ENCODE measurements at regions of chr9 and their contacts with region 1.

Region 1: GRCh38 chr9:104968025-104968982 is 40.3 kb upstream of the ABCA1 start:
- DNase-seq: peak; percentile 71
- H3K4me3 ChIP-seq: peak overlapping the region; percentile 60
- H3K27me3 ChIP-seq: no peaks in the 10 kb centered on the region
- CTCF ChIP-seq: no peak

Region 2: GRCh38 chr9:104984121-104984520 is 15.8 kb after region 1 on chr9:
- CTCF ChIA-PET with region 1: no interaction called
- POLR2A ChIA-PET with region 1: no interaction called
- DNase-seq: no peak
- H3K4me3 ChIP-seq: no peak overlapping the region
- H3K27me3 ChIP-seq: no peaks in the 10 kb centered on the region
- CTCF ChIP-seq: no peak

Region 3: GRCh38 chr9:105046907-105047741 is 78.8 kb after region 1 on chr9:
- CTCF ChIA-PET with region 1: no interaction called
- POLR2A ChIA-PET with region 1: interaction called, 22 read pairs
- DNase-seq: no peak
- H3K4me3 ChIP-seq: no peak overlapping the region
- H3K27me3 ChIP-seq: no peaks in the 10 kb centered on the region
- CTCF ChIP-seq: no peak